Lower lobe of right lung (tissue), 2 donors: ENCODE measurements at regions of chr14 and their contacts with region 1.

Region 1: DNA sequence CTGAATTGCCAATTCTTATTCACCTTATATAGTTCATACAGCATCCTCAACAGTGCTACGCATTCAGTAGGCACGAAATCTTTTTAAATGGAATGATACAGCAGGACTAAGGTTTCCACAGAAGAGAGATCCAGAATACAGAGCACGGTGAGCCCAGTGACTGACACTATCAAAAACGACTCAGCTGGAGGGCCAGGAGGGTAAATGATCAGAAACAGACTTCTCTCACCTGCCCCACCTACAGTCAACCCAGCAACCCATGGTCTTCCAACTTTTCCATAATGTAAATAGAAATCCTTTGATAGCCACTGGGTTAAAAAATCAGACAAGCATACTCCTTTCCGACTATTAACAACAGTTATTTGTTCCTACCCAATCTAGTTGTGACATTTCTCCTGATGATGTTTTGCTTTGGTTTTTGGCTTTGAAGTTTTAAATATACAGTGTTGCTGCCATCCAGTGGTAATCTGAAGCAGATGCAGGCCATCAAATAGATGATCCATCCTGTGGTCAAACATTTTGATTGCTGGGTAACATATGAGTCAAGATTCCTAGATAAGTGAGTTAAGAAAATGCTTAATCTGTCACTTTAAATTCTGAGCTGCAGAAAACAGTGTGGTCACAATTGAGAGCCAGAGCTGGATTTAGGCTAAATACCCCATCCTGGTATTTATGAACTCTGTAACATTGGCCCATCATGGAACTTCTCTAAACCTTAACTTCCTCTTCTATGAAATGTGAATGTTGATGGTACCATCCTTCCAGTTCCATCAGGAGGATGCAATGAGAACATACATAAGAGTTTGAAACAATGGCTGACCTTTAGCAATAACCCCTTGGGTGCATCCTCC is 42.0 kb downstream of the GPHB5 start:
- DNase-seq: no peak
- ATAC-seq: peak in 1 of 2 donors; percentile 39
- H3K4me3 ChIP-seq: no peak overlapping the region
- H3K27ac ChIP-seq: no peak overlapping the region
- H3K4me1 ChIP-seq: peaks cover 14% of the 10 kb centered on the region
- H3K27me3 ChIP-seq: no peaks in the 10 kb centered on the region
- CTCF ChIP-seq: peak; percentile 78

Region 2: GRCh38 chr14:62179367-62180018 is 1097.2 kb before region 1 on chr14:
- intact Hi-C with region 1: loop called (anchors 10 kb)
- DNase-seq: no peak
- ATAC-seq: peak; percentile 53 to 77
- H3K4me3 ChIP-seq: no peak overlapping the region
- H3K27ac ChIP-seq: no peak overlapping the region
- H3K4me1 ChIP-seq: no peaks in the 10 kb centered on the region
- H3K27me3 ChIP-seq: no peaks in the 10 kb centered on the region
- CTCF ChIP-seq: peak; percentile 57

Region 3: GRCh38 chr14:63174760-63175211 is 101.9 kb before region 1 on chr14:
- intact Hi-C with region 1: no loop called
- DNase-seq: no peak
- ATAC-seq: peak in 1 of 2 donors; percentile 12
- H3K4me3 ChIP-seq: no peak overlapping the region
- H3K27ac ChIP-seq: no peak overlapping the region
- H3K4me1 ChIP-seq: peaks cover 12% of the 10 kb centered on the region
- H3K27me3 ChIP-seq: no peaks in the 10 kb centered on the region
- CTCF ChIP-seq: peak; percentile 58

Region 4: GRCh38 chr14:63186453-63186852 is 90.3 kb before region 1 on chr14:
- intact Hi-C with region 1: loop called (anchors 10 kb)
- DNase-seq: no peak
- ATAC-seq: no peak
- H3K4me3 ChIP-seq: no peak overlapping the region
- H3K27ac ChIP-seq: no peak overlapping the region
- H3K4me1 ChIP-seq: no peaks in the 10 kb centered on the region
- H3K27me3 ChIP-seq: no peaks in the 10 kb centered on the region
- CTCF ChIP-seq: no peak

Region 5: DNA sequence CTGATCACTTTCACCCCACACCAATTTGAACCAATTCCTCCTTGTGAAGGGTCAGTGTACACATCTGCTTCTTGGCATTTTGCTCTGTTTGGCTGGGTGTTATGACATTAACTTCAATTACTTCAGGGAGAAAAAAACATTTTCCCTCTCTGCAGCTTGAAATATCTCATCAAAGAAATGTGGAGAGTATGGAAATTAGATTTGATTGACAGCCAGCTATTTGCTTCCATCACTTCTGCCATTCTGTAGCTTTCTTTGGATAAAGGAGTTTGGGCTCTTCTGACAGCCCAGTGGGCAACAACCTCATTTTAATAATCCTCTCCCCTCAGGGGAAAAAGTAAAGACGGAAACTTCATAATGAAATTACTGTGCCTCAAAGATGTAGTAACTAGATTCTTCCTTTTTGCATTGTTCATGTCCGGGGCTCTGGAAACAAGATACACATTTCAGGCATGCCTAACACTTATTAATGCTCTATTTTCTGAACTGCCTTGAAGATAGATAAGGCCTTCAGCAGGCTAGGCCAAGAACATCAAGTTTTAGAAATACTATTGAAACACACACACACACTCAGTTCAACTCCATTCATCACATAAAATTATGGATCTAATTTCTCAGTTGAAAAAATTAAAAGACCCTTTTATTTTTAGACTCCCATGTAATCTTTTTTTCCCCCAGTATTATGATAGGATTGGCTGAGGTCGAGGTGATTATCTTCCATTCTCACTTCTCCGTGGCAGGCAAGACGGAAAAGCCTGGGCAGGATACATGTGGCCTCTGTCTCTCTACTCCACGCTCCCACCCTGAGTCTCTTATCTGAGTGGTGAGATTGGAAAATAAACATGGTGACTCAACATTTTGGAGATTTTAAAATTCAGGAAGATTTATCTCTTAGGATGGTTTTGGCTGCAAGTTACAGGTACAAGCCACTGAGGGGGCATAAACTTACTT is 52.3 kb after region 1 on chr14:
- intact Hi-C with region 1: no loop called
- DNase-seq: no peak
- ATAC-seq: no peak
- H3K4me3 ChIP-seq: no peak overlapping the region
- H3K27ac ChIP-seq: no peak overlapping the region
- H3K4me1 ChIP-seq: no peaks in the 10 kb centered on the region
- H3K27me3 ChIP-seq: no peaks in the 10 kb centered on the region
- CTCF ChIP-seq: no peak